Lower leg skin (tissue), 4 donors: ENCODE measurements at regions of chr11 and their contacts with region 1.

Region 1: DNA sequence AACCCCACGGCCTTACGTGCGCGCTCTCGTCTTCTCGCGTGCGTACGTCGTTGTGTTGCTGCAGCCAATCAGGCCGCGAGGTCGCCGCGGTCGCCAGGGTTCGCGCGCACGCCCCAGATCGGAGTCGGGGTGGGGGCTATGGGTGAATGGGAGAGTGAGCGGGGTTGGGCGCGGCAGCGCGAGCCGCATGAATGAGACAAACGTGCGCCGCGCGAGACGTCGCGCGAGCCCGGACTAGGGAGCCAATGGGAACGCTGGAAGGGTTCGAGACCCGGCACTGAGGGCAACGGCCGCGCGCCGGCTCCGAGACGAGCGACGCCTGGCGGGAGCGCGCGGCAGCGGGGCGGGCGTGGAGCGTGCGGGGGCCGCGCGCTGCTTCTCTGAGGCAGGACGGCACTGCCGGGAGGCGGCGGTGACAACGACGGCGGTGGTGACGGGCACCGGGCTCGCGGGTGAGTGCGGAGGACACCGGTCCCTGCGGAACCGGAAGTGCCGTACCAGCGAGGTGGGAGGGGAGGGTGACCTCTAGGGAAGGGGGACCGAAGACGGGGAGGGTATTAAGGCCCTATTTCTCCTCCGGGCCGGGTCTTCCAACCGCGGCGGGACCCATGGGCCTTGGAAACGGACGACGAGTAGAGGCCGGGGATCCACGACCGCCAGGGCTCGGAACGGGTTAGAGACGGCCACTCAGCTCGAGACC is at the start of gene ZDHHC5:
- DNase-seq: peak; percentile 99 to 100
- H3K4me3 ChIP-seq: peak within 1 kb of the TSS; percentile 86
- CTCF ChIP-seq: no peak
- POLR2A ChIP-seq: no peak
- total RNA-seq, gene ZDHHC5: 72.9 to 99.1 (median 84.5) TPM

Region 2: DNA sequence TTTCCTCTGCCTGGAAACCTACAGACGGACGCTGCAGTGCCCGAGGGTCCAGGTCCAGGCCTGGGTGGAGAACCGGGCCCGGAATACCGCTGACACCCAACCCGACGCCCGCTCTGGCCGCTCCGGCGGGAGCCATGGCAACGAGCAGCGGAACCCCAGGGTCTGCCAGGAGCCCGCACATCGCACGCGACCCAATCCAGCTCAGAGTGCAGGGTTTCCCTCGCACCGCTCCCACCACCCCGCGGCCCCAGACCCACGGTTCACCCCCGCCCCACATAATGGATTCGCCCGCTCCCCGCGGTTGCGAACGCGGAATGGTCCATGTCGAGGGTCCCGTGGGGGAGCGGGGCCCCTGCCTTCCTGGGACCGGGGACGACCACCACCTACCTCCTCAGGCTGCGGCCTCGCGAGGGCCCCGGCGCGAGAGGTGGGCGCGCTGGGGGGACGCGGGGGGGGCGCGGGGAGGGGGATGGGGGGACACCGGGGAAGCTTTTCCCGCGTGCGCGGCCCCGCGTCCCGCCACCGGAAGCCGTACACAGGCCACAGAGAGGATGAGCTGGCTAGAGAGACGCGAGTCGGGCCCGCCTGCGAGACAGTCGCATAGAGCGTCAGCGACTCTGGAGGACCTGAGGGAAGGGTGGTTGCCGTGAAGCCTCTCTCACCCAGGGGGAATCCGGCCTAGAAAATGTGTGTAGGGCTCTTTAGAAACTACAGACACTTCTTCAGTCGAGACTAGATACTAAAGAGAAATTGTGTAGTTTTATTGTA is 332.4 kb before region 1 on chr11 and contains the start of gene SSRP1:
- intact Hi-C with region 1: loop called (anchors 10 kb)
- DNase-seq: peak; percentile 85 to 97
- H3K4me3 ChIP-seq: peak within 1 kb of the TSS; percentile 62
- CTCF ChIP-seq: no peak
- POLR2A ChIP-seq: no peak
- total RNA-seq, gene SSRP1: 66.1 to 76.1 (median 74.6) TPM

Region 3: GRCh38 chr11:57387289-57388030 is 280.4 kb before region 1 on chr11:
- intact Hi-C with region 1: no loop called
- DNase-seq: no peak
- H3K4me3 ChIP-seq: no peak overlapping the region
- CTCF ChIP-seq: no peak
- POLR2A ChIP-seq: no peak

Region 4: DNA sequence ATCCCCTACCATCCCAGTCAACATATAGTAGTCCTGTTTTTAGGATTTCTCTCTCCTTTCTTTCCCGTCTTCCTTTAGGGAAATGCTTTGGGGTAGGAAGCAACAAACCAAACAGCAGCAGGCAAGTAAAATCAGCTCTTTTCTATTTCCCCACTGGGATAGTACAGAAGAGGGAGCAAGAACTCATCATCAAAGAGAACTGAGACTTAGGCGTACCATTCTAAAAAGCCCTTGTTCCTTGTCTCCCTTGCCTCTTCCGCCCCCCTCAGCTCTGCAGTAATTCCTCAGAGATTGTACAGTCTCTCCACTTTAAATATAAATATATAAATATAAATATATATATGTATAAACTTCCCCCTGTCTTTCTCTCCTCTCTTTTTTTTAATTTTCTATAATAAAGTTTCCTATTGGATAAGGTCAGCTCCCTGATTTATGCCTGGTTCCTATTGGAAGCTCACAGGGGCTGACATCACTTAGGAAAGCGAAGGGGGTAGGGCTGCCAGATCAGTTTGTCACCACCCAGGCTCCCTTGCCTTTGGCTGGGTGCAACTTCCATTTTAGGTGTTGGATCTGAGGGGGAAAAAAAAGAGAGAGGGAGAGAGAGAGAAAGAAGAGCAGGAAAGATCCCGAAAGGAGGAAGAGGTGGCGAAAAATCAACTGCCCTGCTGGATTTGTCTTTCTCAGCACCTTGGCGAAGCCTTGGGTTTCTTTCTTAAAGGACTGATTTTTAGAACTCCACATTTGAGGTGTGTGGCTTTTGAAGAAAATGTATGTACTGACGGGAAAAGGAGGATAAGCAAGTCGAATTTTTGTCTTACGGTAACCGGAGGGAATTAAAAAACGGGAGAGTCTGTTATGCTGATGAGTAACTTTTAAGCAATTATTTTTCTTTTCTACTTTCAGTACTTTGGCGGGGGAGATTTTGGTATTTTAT is 93.7 kb after region 1 on chr11 and contains the start of gene CTNND1:
- intact Hi-C with region 1: no loop called
- DNase-seq: peak; percentile 91 to 96
- H3K4me3 ChIP-seq: peak within 1 kb of the TSS; percentile 36
- CTCF ChIP-seq: no peak
- POLR2A ChIP-seq: no peak
- total RNA-seq, gene CTNND1: 186 to 243 (median 197) TPM